ENCODE measurements at regions of chr11 and their contacts with region 1.

Region 1: GRCh38 chr11:111982019-111982464 is 43.2 kb upstream of the DLAT start:
- DNase-seq: peak; percentile 60
- ATAC-seq: peak in 1 of 2 donors; percentile 33

Region 2: DNA sequence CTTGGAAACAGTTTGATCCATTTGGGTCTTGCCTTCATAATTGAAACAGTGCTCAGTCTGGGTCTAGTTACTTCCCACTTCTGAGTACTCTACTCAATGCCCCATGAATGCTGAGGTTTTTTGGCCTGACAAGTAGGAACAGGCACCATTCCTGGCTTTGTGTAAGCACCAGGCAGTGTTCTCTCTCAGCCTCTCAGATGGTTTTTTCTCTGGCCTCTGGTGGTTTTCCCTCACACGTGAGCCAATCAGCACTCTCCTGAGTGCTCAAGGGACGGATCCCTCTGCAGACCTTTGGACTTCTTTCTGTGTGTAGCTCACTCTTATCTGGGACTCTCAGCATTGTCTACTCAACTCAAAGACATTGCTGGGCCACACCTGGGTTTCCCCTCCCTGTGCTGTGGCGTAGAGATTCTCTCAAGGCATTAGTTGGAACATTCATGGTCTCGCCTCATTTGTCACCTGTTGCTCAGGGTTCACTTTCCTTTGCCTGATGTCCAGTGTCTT is 358.5 kb before region 1 on chr11:
- intact Hi-C with region 1: no loop called
- DNase-seq: no peak
- ATAC-seq: no peak

Region 3: DNA sequence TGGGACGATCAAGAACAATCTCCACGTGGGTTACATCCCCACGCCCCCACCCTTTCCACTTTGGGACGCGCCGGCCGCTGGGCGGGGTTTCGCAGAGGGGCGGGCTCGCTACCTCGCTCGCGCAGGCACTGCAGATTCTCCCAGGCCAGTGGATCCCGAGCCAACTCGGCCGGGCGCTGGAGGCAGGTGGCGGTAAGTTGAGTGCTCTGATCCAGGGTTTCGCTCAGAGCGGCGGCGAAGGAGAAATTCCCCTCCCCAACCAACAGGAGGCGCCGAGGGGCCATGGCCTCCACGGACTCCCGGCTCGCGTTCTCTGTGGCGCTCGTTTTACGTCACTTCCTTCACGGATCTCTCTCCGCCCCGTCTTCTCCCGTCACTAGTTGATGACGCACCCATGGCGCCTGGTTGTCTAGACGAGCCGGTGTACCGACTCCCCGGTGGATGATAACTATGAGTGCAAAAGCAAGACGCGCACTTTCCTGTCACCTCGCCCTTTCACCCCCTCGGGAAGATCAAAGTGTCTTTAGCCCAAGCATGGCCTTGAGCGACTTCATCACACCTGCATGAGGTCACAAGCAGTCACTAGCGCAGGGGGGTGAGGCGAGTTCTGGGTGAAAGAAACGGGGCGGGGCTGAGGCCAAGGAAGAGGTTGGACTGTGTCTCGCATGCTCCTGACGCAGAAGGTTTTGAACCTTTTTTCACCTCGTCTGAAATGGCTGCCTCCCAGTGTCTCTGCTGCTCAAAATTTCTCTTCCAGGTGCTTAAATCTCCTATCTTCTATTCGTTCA is 103.0 kb before region 1 on chr11 and contains the starts of genes CFAP68 and FDXACB1:
- intact Hi-C with region 1: loop called (anchors 2 to 10 kb)
- DNase-seq: peak; percentile 97
- ATAC-seq: peak; percentile 96 to 97
- total RNA-seq, gene CFAP68: 17.1 to 22.2 TPM
- total RNA-seq, gene FDXACB1: 1.0 to 1.2 TPM

Region 4: DNA sequence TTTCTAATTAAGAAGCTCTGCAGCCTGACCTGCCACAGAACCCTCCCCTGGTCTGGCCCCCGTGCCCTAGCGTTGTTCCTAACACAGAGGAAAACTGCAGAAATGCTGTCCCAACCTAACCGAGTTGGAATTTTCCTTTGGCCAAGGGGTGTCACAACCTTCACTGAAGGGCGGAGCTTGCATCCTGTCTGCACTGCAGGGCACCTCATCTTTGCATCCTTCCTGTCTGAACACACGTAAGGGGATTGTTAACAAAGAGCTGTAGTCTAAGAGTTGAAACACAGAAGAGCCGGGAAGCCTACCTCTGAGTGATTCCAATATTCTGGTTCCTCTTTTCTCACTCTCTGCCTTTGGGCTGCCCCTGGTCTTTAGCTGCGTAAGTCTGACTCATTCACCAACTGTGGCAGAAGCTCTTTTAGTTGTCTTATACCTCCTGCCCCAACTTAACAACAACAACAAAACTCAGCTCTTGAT is 43.3 kb before region 1 on chr11:
- intact Hi-C with region 1: loop called (anchors 5 kb)
- DNase-seq: no peak
- ATAC-seq: peak in 1 of 2 donors; percentile 20

Region 5: DNA sequence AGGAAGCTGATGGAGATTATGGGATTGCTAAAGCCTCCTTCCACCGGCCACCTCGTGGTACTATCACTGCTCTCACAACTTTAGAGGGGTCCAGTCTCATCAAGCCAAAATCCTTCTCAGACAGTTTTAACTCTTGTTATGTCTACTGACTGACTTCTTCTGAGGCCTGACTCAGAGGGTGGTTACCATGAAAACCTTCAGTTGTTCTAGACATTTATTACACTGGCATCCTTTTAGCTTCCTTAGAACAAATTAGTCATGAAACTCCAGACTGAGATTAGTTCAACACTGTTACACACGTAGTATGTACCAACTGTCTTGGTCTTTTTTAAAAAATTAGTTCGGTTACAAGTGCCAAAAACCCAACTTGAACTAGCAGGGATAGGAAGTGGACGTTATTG is 37.4 kb before region 1 on chr11:
- intact Hi-C with region 1: loop called (anchors 5 kb)
- DNase-seq: no peak
- ATAC-seq: peak in 1 of 2 donors; percentile 74